Right lobe of liver (tissue), 6 donors: ENCODE measurements at regions of chr1 and their contacts with region 1.

Region 1: GRCh38 chr1:220219865-220220698 is 52.2 kb downstream of the RAB3GAP2 start:
- DNase-seq: no peak
- ATAC-seq: no peak
- H3K4me3 ChIP-seq: no peak overlapping the region
- H3K27ac ChIP-seq: no peak overlapping the region
- H3K4me1 ChIP-seq: no peaks in the 10 kb centered on the region
- H3K27me3 ChIP-seq: no peaks in the 10 kb centered on the region
- CTCF ChIP-seq: no peak
- POLR2A ChIP-seq: no peak

Region 2: GRCh38 chr1:220281159-220281574 is 61.1 kb after region 1 on chr1:
- intact Hi-C with region 1: loop called in 1 of 2 experiments (anchors 10 kb)
- DNase-seq: no peak
- ATAC-seq: peak in 3 of 4 donors; percentile 23 to 69 (median 25)
- H3K4me3 ChIP-seq: no peak overlapping the region
- H3K27ac ChIP-seq: no peak overlapping the region
- H3K4me1 ChIP-seq: no peaks in the 10 kb centered on the region
- H3K27me3 ChIP-seq: no peaks in the 10 kb centered on the region
- CTCF ChIP-seq: peak in 3 of 4 donors; percentile 8 to 17 (median 16)
- POLR2A ChIP-seq: no peak